Heart left ventricle (tissue), 16 donors: ENCODE measurements at regions of chr9 and their contacts with region 1.

Region 1: GRCh38 chr9:7289773-7290172 is 509.8 kb downstream of the DMAC1 start:
- DNase-seq: no peak
- ATAC-seq: no peak
- H3K4me3 ChIP-seq: no peak overlapping the region
- H3K27ac ChIP-seq: no peak overlapping the region
- H3K4me1 ChIP-seq: no peaks in the 10 kb centered on the region
- H3K27me3 ChIP-seq: no peaks in the 10 kb centered on the region
- CTCF ChIP-seq: no peak
- POLR2A ChIP-seq: no peak

Region 2: DNA sequence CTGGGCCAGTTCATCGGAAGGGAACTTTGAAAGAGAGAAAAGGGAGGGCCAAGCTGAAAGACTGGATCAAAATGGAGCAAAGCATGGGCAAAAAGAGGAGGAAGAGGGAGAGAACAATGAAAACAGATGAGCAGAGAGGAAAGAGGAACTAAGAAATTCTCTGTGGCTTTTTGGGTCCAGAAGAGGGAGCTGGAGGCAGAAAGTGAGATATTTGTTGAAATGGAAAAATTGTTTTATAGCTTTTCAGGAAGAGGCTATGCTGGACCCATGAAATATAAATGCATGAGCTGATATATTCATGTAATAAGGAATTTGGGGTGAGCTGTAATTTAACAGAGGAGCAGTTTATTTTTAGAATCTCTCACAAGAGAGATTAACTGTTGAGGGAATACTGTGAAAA is 52.5 kb after region 1 on chr9:
- intact Hi-C with region 1: loop called in 1 of 10 experiments (anchors 10 kb)
- DNase-seq: no peak
- ATAC-seq: peak in 2 of 4 donors; percentile 20
- H3K4me3 ChIP-seq: no peak overlapping the region
- H3K27ac ChIP-seq: no peak overlapping the region
- H3K4me1 ChIP-seq: peaks cover 0 to 10% (median 7%) of the 10 kb centered on the region in 12 donors
- H3K27me3 ChIP-seq: no peaks in the 10 kb centered on the region
- CTCF ChIP-seq: peak in 6 of 12 donors; percentile 24 to 48 (median 37)
- POLR2A ChIP-seq: no peak